ENCODE measurements at regions of chr11 and their contacts with region 1.

Region 1: GRCh38 chr11:64652586-64653387 is 61.8 kb downstream of the SLC22A12 start:
- DNase-seq: peak; percentile 58
- ATAC-seq: peak; percentile 90
- H3K4me3 ChIP-seq: no peak overlapping the region
- H3K27ac ChIP-seq: no peak overlapping the region
- H3K4me1 ChIP-seq: no peaks in the 10 kb centered on the region
- H3K27me3 ChIP-seq: no peaks in the 10 kb centered on the region
- CTCF ChIP-seq: peak; percentile 98

Region 2: DNA sequence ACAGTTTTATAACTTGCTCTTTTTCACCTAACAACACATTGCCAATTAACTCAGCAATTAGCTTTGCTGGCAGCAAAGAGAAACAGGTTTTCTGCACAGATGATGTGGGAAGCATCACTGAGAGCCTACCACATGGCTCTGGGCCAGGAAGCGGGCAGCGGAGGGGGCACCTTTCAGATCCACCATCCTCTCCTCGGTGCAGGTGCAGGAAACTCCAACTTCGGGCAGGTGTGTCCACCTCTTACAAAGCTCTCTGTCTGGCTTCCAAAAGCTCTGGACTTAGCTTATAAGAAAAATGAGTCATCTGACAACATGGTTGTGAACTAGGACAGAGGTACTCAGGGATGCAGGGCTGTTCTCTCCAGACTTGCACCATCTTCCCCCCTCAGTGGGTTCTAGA is 216.8 kb before region 1 on chr11:
- CTCF ChIA-PET with region 1: interaction called, 16 read pairs
- POLR2A ChIA-PET with region 1: no interaction called
- in situ Hi-C with region 1: no loop called
- intact Hi-C with region 1: no loop called
- DNase-seq: no peak
- ATAC-seq: peak; percentile 23; the same call in 1 of the 2 replicates
- H3K4me3 ChIP-seq: no peak overlapping the region
- H3K27ac ChIP-seq: no peak overlapping the region
- H3K4me1 ChIP-seq: no peaks in the 10 kb centered on the region
- H3K27me3 ChIP-seq: no peaks in the 10 kb centered on the region
- CTCF ChIP-seq: no peak

Region 3: DNA sequence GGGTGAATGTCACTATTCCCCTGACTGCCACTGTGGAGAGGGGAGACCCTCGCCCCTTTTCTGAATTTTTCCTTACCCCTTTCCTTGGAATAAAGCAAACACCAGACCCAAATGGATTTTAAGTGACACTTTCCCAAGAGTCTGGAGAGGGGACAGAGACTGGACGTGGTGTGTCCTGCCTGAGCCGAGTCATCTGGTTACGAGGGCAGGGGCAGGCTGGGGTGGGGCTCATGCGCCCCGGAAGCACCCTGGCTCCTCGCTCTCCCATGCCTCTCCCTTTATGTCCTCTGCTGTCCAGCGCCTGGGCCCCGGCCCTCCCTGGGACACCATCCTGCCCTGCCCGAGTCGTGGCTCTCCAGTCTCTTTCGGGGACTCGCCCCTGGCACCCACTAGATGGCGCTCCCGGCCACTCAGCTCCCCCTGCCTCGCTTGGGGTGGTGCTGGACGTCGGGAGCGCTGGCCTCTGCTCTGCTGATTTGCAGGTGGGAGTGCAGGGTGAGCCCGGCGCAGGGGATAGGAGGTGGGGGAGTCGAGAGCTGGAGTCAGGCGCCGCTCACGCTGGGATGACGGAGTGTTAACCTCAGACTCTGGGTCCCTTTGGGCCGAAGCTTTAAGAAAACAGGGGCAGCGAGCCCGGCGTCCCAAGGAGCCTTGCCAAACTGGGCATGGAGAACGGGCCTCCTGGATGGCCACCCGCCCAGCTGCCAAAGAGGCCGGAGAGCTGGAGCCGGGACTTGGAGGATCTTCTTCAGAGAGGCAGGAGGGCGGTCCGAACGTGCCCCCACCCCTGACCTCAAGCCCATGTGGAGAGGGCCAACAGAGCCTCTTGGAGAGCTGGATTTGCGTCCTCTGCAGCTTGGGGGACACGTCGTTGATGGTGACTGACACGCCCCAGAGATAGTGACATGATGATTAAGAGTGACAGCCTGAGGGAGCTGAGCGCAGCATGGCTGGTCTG is 203.9 kb before region 1 on chr11:
- CTCF ChIA-PET with region 1: interaction called, 18 read pairs
- POLR2A ChIA-PET with region 1: interaction called, 3 read pairs
- in situ Hi-C with region 1: no loop called
- intact Hi-C with region 1: loop called (anchors 2 kb)
- DNase-seq: peak; percentile 47
- ATAC-seq: peak; percentile 97
- H3K4me3 ChIP-seq: peak overlapping the region; percentile 30 to 56
- H3K27ac ChIP-seq: no peak overlapping the region
- H3K4me1 ChIP-seq: peaks cover 15% of the 10 kb centered on the region
- H3K27me3 ChIP-seq: peaks cover 6% of the 10 kb centered on the region; the same call in 1 of the 2 replicates
- CTCF ChIP-seq: peak; percentile 95

Region 4: DNA sequence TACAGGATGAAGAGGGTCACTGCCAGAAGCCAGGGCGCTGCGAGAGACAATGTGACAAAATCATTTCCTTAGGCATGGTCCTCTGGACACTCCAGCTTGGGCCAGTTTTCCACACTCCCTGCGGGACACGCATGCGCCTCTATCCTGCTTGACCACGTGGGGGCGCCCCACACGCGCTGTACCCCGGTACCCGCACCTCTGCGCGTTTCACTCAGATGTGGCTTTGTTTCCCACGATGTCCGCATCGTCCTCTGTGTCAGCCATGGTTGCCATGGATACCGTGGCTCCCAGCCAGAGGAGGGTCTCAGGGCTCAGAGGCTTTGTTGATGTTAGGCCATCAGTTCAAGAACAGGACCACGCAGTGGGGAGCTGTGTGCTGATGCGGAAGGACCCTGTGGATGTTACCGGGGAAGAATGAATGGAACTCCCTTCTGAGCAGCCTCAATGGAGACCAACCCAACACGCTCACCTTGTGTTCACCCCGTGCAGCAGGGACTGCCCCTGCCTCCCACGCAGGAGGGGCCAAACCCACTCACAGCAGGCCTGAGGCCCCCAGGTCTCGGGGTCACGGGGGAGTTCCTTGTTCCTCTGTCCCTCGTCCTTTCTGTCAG is 162.9 kb before region 1 on chr11:
- CTCF ChIA-PET with region 1: interaction called, 3 read pairs
- POLR2A ChIA-PET with region 1: no interaction called
- in situ Hi-C with region 1: no loop called
- intact Hi-C with region 1: loop called (anchors 5 kb)
- DNase-seq: no peak
- ATAC-seq: peak; percentile 95
- H3K4me3 ChIP-seq: no peak overlapping the region
- H3K27ac ChIP-seq: no peak overlapping the region
- H3K4me1 ChIP-seq: no peaks in the 10 kb centered on the region
- H3K27me3 ChIP-seq: peaks cover 18% of the 10 kb centered on the region
- CTCF ChIP-seq: peak; percentile 96

Region 5: DNA sequence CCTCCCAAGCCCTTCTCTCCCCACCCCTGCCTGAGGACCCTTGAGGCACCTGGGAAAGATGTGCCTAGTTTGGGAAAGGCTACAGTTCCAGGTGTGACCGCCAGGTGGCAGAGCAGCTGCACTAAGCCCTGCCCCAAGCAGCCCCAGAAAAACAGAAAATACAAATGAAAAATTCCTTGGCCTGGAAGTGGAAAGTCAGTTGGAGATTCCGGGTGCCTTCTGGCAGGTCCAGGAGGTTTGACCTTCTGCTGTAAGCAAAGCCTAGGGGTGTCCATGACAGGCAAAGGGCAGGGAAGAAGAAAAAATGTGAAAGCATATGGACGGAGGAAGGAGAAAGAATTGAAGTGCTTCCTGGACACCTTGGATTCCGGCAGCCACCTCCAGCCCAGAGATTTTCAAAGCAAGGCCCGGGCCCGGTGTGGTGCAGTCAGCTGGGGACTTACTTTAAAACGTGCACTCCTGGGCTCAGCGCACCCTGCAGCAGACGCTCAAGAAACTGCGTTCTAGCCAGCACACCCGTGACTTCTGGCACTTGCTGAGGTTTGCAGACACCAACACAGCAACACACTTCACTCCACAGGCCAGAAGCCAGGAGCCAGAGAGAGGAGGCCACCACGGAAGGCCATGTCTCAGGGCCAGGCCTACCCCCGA is 99.1 kb before region 1 on chr11:
- CTCF ChIA-PET with region 1: interaction called, 6 read pairs
- POLR2A ChIA-PET with region 1: no interaction called
- in situ Hi-C with region 1: no loop called
- intact Hi-C with region 1: loop called (anchors 2 kb)
- DNase-seq: peak; percentile 39
- ATAC-seq: peak; percentile 73
- H3K4me3 ChIP-seq: no peak overlapping the region
- H3K27ac ChIP-seq: no peak overlapping the region
- H3K4me1 ChIP-seq: no peaks in the 10 kb centered on the region
- H3K27me3 ChIP-seq: no peaks in the 10 kb centered on the region
- CTCF ChIP-seq: peak; percentile 98

Measured in Panc1 (cell line).